Ovary (tissue), 10 donors: ENCODE measurements at regions of chr15 and their contacts with region 1.

Region 1: GRCh38 chr15:34373951-34374350 is 7.0 kb upstream of the LPCAT4 start:
- DNase-seq: no peak
- H3K4me3 ChIP-seq: no peak overlapping the region
- H3K27ac ChIP-seq: no peak overlapping the region
- H3K4me1 ChIP-seq: no peaks in the 10 kb centered on the region
- H3K27me3 ChIP-seq: no peaks in the 10 kb centered on the region
- CTCF ChIP-seq: no peak
- EP300 ChIP-seq: no peak
- POLR2A ChIP-seq: no peak

Region 2: GRCh38 chr15:34109797-34110663 is 263.9 kb before region 1 on chr15:
- intact Hi-C with region 1: loop called in 1 of 4 experiments (anchors 5 kb)
- DNase-seq: no peak
- H3K4me3 ChIP-seq: no peak overlapping the region
- H3K27ac ChIP-seq: no peak overlapping the region
- H3K4me1 ChIP-seq: no peaks in the 10 kb centered on the region
- H3K27me3 ChIP-seq: no peaks in the 10 kb centered on the region
- CTCF ChIP-seq: no peak
- EP300 ChIP-seq: no peak
- POLR2A ChIP-seq: no peak